OCI-LY7 (cell line): ENCODE measurements at regions of chr3 and their contacts with region 1.

Region 1: GRCh38 chr3:181839039-181839915 is 127.6 kb downstream of the SOX2 start:
- DNase-seq: peak; percentile 81
- H3K4me3 ChIP-seq: peak overlapping the region; percentile 49
- H3K27ac ChIP-seq: peak overlapping the region; percentile 71
- H3K4me1 ChIP-seq: peaks cover 30% of the 10 kb centered on the region
- CTCF ChIP-seq: no peak

Region 2: GRCh38 chr3:180073561-180073960 is 1765.7 kb before region 1 on chr3:
- CTCF ChIA-PET with region 1: no interaction called
- POLR2A ChIA-PET with region 1: interaction called, 10 read pairs
- intact Hi-C with region 1: no loop called
- DNase-seq: no peak
- H3K4me3 ChIP-seq: no peak overlapping the region
- H3K27ac ChIP-seq: no peak overlapping the region
- H3K4me1 ChIP-seq: no peaks in the 10 kb centered on the region
- CTCF ChIP-seq: no peak

Region 3: GRCh38 chr3:181872889-181873288 is 33.6 kb after region 1 on chr3:
- CTCF ChIA-PET with region 1: no interaction called
- POLR2A ChIA-PET with region 1: interaction called, 12 read pairs
- intact Hi-C with region 1: no loop called
- DNase-seq: no peak
- H3K4me3 ChIP-seq: no peak overlapping the region
- H3K27ac ChIP-seq: no peak overlapping the region
- H3K4me1 ChIP-seq: no peaks in the 10 kb centered on the region
- CTCF ChIP-seq: no peak